Ovary (tissue), 10 donors: ENCODE measurements at regions of chr2 and their contacts with region 1.

Region 1: GRCh38 chr2:39227628-39228412 is 15.9 kb downstream of the CDKL4 start:
- DNase-seq: peak; percentile 71 to 86 (median 82)
- H3K4me3 ChIP-seq: no peak overlapping the region
- H3K27ac ChIP-seq: no peak overlapping the region
- H3K4me1 ChIP-seq: no peaks in the 10 kb centered on the region
- H3K27me3 ChIP-seq: no peaks in the 10 kb centered on the region
- CTCF ChIP-seq: peak; percentile 68 to 83 (median 72)
- EP300 ChIP-seq: no peak
- POLR2A ChIP-seq: no peak

Region 2: GRCh38 chr2:39059366-39059952 is 168.4 kb before region 1 on chr2:
- intact Hi-C with region 1: loop called (anchors 5 kb)
- DNase-seq: no peak
- H3K4me3 ChIP-seq: no peak overlapping the region
- H3K27ac ChIP-seq: no peak overlapping the region
- H3K4me1 ChIP-seq: no peaks in the 10 kb centered on the region
- H3K27me3 ChIP-seq: no peaks in the 10 kb centered on the region
- CTCF ChIP-seq: peak; percentile 33 to 74 (median 43)
- EP300 ChIP-seq: no peak
- POLR2A ChIP-seq: no peak

Region 3: GRCh38 chr2:39124000-39124745 is 103.6 kb before region 1 on chr2:
- intact Hi-C with region 1: loop called in 2 of 4 experiments (anchors 2 to 5 kb)
- DNase-seq: peak; percentile 93 to 97 (median 95)
- H3K4me3 ChIP-seq: peak overlapping the region; percentile 68
- H3K27ac ChIP-seq: peak overlapping the region; percentile 67 to 89
- H3K4me1 ChIP-seq: peaks cover 10% of the 10 kb centered on the region
- H3K27me3 ChIP-seq: no peaks in the 10 kb centered on the region
- CTCF ChIP-seq: peak in 1 of 3 donors; percentile 26
- EP300 ChIP-seq: no peak
- POLR2A ChIP-seq: peak; percentile 87

Region 4: GRCh38 chr2:39135690-39136259 is 92.0 kb before region 1 on chr2:
- intact Hi-C with region 1: loop called in 1 of 4 experiments (anchors 10 kb)
- DNase-seq: no peak
- H3K4me3 ChIP-seq: no peak overlapping the region
- H3K27ac ChIP-seq: no peak overlapping the region
- H3K4me1 ChIP-seq: no peaks in the 10 kb centered on the region
- H3K27me3 ChIP-seq: no peaks in the 10 kb centered on the region
- CTCF ChIP-seq: no peak
- EP300 ChIP-seq: no peak
- POLR2A ChIP-seq: no peak

Region 5: GRCh38 chr2:39379643-39380524 is 152.1 kb after region 1 on chr2:
- intact Hi-C with region 1: no loop called
- DNase-seq: no peak
- H3K4me3 ChIP-seq: no peak overlapping the region
- H3K27ac ChIP-seq: no peak overlapping the region
- H3K4me1 ChIP-seq: peaks cover 6% of the 10 kb centered on the region
- H3K27me3 ChIP-seq: no peaks in the 10 kb centered on the region
- CTCF ChIP-seq: peak; percentile 21 to 69 (median 51)
- EP300 ChIP-seq: no peak
- POLR2A ChIP-seq: no peak